Activated CD8-positive, alpha-beta T cell treated with anti-CD3 and anti-CD28 coated beads for 36 hours (primary cell): ENCODE measurements at regions of chr2 and their contacts with region 1.

Region 1: GRCh38 chr2:64831134-64831976 is 157.8 kb upstream of the SLC1A4 start:
- DNase-seq: peak; percentile 93
- ATAC-seq: peak; percentile 93
- H3K4me3 Mint-ChIP-seq: peak overlapping the region; percentile 54
- H3K27ac Mint-ChIP-seq: peak overlapping the region; percentile 88
- H3K4me1 Mint-ChIP-seq: peaks cover 22% of the 10 kb centered on the region
- H3K27me3 Mint-ChIP-seq: no peaks in the 10 kb centered on the region
- CTCF ChIP-seq: peak; percentile 97

Region 2: DNA sequence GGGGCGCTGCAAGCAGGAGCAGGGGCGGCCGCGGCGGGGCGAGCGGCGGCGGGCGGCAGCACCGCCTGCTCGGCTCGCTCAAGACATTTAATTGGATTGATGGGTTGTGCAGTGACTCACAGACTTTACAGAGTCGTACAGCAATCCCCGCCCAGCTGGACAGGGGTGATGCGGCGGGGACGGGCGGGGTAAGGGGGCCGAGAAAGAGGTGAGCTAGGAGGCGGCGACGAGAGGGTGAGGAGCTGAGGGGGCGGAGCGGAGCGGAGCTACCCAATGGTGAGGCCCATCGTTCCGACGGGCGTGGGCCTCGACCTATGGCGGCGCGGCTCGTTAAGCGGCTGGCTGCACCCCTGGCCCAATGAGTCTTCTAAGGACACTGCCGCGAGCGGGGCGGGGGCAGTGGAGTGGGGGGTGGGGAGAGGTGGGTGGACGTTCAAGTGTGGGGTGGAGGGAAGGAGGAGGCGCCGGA is 80.5 kb before region 1 on chr2:
- CTCF ChIA-PET with region 1: interaction called, 5 read pairs
- POLR2A ChIA-PET with region 1: no interaction called
- intact Hi-C with region 1: loop called (anchors 5 kb)
- DNase-seq: peak; percentile 99
- ATAC-seq: peak; percentile 86
- H3K4me3 Mint-ChIP-seq: peak overlapping the region; percentile 93
- H3K27ac Mint-ChIP-seq: peak overlapping the region; percentile 97
- H3K4me1 Mint-ChIP-seq: peaks cover 29% of the 10 kb centered on the region
- H3K27me3 Mint-ChIP-seq: no peaks in the 10 kb centered on the region
- CTCF ChIP-seq: no peak

Region 3: DNA sequence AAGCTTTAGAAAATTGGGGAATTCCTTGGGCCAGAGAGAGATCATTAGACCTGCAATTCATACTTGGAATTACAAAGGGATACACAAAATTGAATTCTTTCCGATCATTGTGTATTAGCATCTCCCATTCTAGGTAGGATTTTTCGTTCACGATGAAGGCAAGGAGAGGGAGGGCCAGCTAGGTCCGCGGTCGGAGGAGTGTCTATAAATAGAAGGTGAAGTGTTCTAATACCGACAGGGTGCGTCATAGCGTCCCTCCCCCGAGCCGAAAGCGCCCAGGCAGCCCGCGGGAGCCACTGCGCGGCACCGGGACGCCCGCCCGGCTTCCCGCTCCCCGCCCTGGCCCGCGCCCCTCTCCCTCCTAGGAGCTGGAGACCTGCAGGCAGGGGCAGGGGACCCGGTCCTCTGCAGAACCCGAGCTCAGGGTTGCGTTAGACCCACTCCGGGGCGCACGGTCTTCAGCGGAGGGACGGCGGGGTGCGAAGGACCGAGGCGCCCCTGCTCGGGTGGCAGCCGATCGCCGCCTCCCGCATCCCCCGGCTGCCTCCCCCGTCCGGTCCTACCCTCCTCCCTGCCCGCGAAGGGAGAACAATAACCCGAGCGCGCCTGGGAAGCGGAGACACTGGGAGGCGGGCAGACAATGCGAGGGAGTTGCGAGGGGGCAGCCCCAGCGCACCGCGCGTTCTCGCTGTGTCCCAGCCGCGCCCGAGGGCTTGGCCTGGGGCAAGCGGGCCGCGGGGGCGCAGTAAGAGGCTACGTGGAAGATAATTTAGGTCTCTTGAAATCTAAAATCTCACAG is 63.5 kb before region 1 on chr2:
- CTCF ChIA-PET with region 1: interaction called, 7 read pairs
- POLR2A ChIA-PET with region 1: interaction called, 3 read pairs
- intact Hi-C with region 1: loop called (anchors 5 kb)
- DNase-seq: peak; percentile 90
- ATAC-seq: peak; percentile 84
- H3K4me3 Mint-ChIP-seq: peak overlapping the region; percentile 81
- H3K27ac Mint-ChIP-seq: peak overlapping the region; percentile 94
- H3K4me1 Mint-ChIP-seq: peaks cover 33% of the 10 kb centered on the region
- H3K27me3 Mint-ChIP-seq: no peaks in the 10 kb centered on the region
- CTCF ChIP-seq: no peak

Region 4: DNA sequence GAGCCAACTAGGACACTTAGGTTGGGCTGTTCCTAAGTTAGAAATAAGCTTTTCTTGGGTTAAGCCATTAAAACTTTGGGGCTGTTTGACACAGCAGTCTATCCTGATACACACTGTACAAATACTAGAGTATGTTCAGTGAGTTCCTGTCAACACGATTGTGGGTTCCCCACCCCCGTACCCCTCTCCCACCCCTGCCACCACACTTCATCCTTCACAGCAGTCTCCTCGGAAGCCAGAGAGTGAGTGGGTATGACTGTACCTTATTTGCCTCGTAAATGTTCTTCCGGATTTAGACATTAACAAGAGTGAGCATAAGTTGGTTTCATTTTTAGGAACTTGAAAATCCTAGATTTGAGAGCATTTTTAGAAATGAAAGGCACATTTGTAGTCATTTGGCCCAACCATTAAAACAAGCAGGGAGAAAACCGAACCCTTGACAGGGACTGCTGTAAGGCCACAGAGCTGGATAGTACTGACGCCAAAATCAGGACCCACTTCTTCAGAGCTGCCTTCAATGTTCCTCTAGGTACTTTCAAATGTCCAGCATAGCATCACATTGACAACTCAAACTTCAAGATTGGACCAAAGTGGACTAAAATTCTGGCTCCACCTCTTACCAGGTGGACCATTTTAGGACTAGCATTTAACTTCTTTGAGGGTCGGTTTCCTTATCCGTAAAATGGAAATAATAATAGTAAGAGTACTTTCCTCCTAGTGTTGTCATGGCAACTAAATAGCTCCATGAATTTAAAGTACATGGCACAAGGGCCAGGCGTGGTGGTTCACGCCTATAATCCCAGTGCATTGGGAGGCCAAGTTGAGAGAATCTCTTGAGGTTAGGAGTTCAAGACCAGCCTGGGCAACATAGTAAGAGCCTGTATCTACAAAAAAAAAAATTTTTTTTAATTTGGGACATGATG is 11.3 kb before region 1 on chr2:
- CTCF ChIA-PET with region 1: interaction called, 12 read pairs
- POLR2A ChIA-PET with region 1: interaction called, 4 read pairs
- intact Hi-C with region 1: no loop called
- DNase-seq: peak; percentile 69
- ATAC-seq: peak; percentile 96
- H3K4me3 Mint-ChIP-seq: peak overlapping the region; percentile 65
- H3K27ac Mint-ChIP-seq: peak overlapping the region; percentile 93
- H3K4me1 Mint-ChIP-seq: peaks cover 27% of the 10 kb centered on the region
- H3K27me3 Mint-ChIP-seq: no peaks in the 10 kb centered on the region
- CTCF ChIP-seq: no peak

Region 5: GRCh38 chr2:64848363-64848762 is 17.0 kb after region 1 on chr2:
- CTCF ChIA-PET with region 1: interaction called, 15 read pairs
- POLR2A ChIA-PET with region 1: no interaction called
- intact Hi-C with region 1: no loop called
- DNase-seq: no peak
- ATAC-seq: no peak
- H3K4me3 Mint-ChIP-seq: no peak overlapping the region
- H3K27ac Mint-ChIP-seq: no peak overlapping the region
- H3K4me1 Mint-ChIP-seq: no peaks in the 10 kb centered on the region
- H3K27me3 Mint-ChIP-seq: peaks cover 1% of the 10 kb centered on the region
- CTCF ChIP-seq: no peak

Region 6: GRCh38 chr2:65292461-65293011 is 461.2 kb after region 1 on chr2:
- CTCF ChIA-PET with region 1: no interaction called
- POLR2A ChIA-PET with region 1: no interaction called
- intact Hi-C with region 1: no loop called
- DNase-seq: no peak
- ATAC-seq: no peak
- H3K4me3 Mint-ChIP-seq: no peak overlapping the region
- H3K27ac Mint-ChIP-seq: no peak overlapping the region
- H3K4me1 Mint-ChIP-seq: peaks cover 2% of the 10 kb centered on the region
- H3K27me3 Mint-ChIP-seq: peaks cover 4% of the 10 kb centered on the region
- CTCF ChIP-seq: no peak